Dendritic cell treated with granulocyte-macrophage colony-stimulating factor and Interleukin-4, amounts not matched to agents 40 ng/mL and 50 ng/mL, for 4 days (primary cell): ENCODE measurements at regions of chr1 and their contacts with region 1.

Region 1: GRCh38 chr1:154878371-154879022 is 8.4 kb upstream of the KCNN3 start:
- H3K4me3 Mint-ChIP-seq: no peak overlapping the region
- H3K27ac Mint-ChIP-seq: no peak overlapping the region
- H3K4me1 Mint-ChIP-seq: no peaks in the 10 kb centered on the region
- H3K27me3 Mint-ChIP-seq: peaks cover 5% of the 10 kb centered on the region

Region 2: GRCh38 chr1:154669464-154670282 is 208.8 kb before region 1 on chr1:
- intact Hi-C with region 1: loop called (anchors 1 kb)
- H3K4me3 Mint-ChIP-seq: no peak overlapping the region
- H3K27ac Mint-ChIP-seq: no peak overlapping the region
- H3K4me1 Mint-ChIP-seq: peaks cover 2% of the 10 kb centered on the region
- H3K27me3 Mint-ChIP-seq: peaks cover 5% of the 10 kb centered on the region

Region 3: GRCh38 chr1:154906621-154907081 is 28.2 kb after region 1 on chr1:
- intact Hi-C with region 1: no loop called
- H3K4me3 Mint-ChIP-seq: no peak overlapping the region
- H3K27ac Mint-ChIP-seq: no peak overlapping the region
- H3K4me1 Mint-ChIP-seq: no peaks in the 10 kb centered on the region
- H3K27me3 Mint-ChIP-seq: no peaks in the 10 kb centered on the region

Region 4: DNA sequence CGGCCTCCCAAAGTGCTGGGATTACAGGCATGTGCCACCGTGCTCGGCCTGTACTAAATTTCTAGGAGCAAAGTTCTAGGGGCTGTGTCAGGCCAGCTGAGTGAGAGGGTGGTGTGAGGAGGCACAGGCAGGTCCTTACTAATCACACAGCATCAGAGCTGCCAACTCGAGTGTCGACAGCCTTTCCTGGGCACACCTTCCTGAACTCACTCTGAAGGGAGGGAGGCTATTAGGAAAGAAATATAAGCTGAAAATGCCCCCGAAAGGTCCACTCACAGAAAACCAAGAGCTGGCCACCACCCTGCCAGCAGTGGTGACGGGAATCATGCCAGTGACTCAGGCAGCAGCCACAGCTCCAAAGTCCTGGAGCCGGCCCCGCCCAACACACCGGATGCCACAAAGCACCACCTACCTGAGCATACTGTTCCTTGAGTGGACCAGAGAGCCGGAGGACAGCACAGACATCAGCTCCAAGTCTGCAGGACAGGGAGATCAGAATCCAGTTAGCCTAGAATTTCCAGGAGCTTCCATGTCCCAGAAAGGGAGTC is 53.5 kb after region 1 on chr1:
- intact Hi-C with region 1: no loop called
- H3K4me3 Mint-ChIP-seq: no peak overlapping the region
- H3K27ac Mint-ChIP-seq: no peak overlapping the region
- H3K4me1 Mint-ChIP-seq: peaks cover 33% of the 10 kb centered on the region
- H3K27me3 Mint-ChIP-seq: no peaks in the 10 kb centered on the region

Region 5: DNA sequence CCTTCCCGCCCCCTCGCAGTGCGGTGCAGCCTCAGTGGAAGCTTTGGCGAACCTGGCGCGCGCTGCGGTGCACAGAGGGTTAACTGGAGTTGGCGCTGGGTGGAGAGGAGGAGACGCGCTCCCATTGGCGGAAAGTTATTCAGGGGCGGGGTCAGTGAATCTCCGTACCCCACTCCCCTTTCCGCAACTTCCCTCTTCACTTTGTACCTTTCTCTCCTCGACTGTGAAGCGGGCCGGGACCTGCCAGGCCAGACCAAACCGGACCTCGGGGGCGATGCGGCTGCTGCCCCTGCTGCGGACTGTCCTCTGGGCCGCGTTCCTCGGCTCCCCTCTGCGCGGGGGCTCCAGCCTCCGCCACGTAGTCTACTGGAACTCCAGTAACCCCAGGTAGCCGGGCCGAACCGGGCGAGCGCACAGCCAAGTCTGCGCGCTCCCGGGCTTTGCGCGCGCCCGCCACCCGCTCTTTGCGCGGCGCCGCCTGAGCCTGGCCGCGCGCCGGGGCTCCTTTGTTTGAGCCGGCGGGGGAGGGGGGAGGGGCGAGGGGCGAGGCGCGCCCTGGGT is 185.1 kb after region 1 on chr1 and contains the start of gene EFNA4:
- intact Hi-C with region 1: no loop called
- H3K4me3 Mint-ChIP-seq: peak within 1 kb of the TSS; percentile 84
- H3K27ac Mint-ChIP-seq: peak within 1 kb of the TSS; percentile 68
- H3K4me1 Mint-ChIP-seq: peaks cover 72% of the 10 kb centered on the region
- H3K27me3 Mint-ChIP-seq: peaks cover 15% of the 10 kb centered on the region